Mammary epithelial cell (primary cell): ENCODE measurements at regions of chr3 and their contacts with region 1.

Region 1: GRCh38 chr3:74344865-74345440 is 269.5 kb downstream of the CNTN3 start:
- DNase-seq: no peak
- H3K4me3 ChIP-seq: no peak overlapping the region
- H3K27ac ChIP-seq: no peak overlapping the region
- H3K4me1 ChIP-seq: no peaks in the 10 kb centered on the region
- H3K27me3 ChIP-seq: no peaks in the 10 kb centered on the region
- CTCF ChIP-seq: no peak

Region 2: GRCh38 chr3:74302969-74303368 is 42.0 kb before region 1 on chr3:
- CTCF ChIA-PET with region 1: no interaction called
- dilution Hi-C with region 1: loop called (anchors 5 kb)
- in situ Hi-C with region 1: no loop called
- intact Hi-C with region 1: no loop called
- DNase-seq: no peak
- H3K4me3 ChIP-seq: no peak overlapping the region
- H3K27ac ChIP-seq: no peak overlapping the region
- H3K4me1 ChIP-seq: peaks cover 4% of the 10 kb centered on the region
- H3K27me3 ChIP-seq: no peaks in the 10 kb centered on the region
- CTCF ChIP-seq: no peak